ENCODE measurements at regions of chr16 and their contacts with region 1.

Region 1: DNA sequence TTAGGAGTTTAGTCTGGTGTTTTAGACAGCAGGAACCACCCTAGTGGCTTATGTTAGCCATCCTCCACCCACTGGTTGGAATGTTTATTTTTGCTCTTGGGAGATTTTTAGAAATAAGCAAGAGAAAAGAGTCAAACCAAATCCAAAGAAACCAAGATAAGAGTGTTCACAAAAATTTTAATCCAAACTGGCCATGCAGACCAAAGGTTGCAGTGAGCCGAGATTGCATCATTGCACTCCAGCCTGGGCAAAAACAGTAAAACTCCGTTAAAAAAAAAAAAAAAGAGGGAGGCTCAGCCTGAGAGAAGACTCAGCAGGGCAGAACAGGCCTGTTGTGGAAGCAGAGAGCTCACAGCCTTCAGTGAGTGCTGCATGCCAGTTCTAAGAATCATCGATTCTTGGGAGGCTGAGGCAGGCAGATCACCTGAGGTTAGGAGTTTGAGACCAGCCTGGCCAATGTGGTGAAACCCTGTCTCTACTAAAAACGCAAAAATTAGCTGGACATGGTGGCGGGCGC is 12.2 kb upstream of the C16orf54 start:
- DNase-seq: no peak
- ATAC-seq: no peak
- H3K4me3 ChIP-seq: no peak overlapping the region
- H3K4me3 Mint-ChIP-seq: peak overlapping the region in 2 of 10 donors; percentile 19 to 36
- H3K27ac ChIP-seq: peak overlapping the region; percentile 61
- H3K27ac Mint-ChIP-seq: peak overlapping the region in 8 of 9 donors; percentile 37 to 96 (median 84)
- H3K4me1 ChIP-seq: peaks cover 8 to 33% of the 10 kb centered on the region in 2 donors
- H3K4me1 Mint-ChIP-seq: peaks cover 14 to 58% (median 40%) of the 10 kb centered on the region in 7 donors
- H3K27me3 ChIP-seq: no peaks in the 10 kb centered on the region
- H3K27me3 Mint-ChIP-seq: peaks cover 0 to 6% (median 0%) of the 10 kb centered on the region in 5 donors

Region 2: DNA sequence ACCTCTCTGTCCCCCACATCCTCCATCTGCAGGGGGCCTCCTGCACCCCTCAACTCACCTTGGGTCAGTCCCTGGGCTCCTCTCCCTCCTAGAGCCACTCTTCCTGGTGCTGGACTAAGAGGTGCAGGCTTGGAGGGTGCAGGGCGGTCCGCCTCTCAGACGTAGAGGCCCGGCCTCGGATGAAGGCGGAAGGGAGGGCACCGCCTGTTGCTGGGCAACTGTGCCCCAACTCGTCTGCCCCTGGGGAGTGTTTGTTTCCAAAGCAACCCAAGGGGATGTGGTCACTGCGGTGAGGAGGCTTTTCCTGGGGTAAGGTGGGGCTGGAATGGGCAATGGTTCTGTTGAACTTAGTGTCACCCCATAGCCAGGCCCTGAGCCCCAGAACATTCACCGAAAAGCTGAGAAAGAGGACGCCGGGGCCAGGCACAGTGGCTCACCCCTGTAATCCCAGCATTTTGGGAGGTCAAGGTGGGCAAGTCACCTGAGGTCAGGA is 12.1 kb before region 1 on chr16 and contains the start of gene C16orf54:
- CTCF ChIA-PET with region 1: interaction called, 10 read pairs
- POLR2A ChIA-PET with region 1: interaction called, 36 read pairs
- intact Hi-C with region 1: loop called (anchors 1 kb)
- DNase-seq: peak; percentile 80 to 99 (median 98)
- ATAC-seq: peak; percentile 91
- H3K4me3 ChIP-seq: peak within 1 kb of the TSS; percentile 76
- H3K4me3 Mint-ChIP-seq: peak within 1 kb of the TSS; percentile 96 to 100 (median 99)
- H3K27ac ChIP-seq: peak within 1 kb of the TSS; percentile 99
- H3K27ac Mint-ChIP-seq: peak within 1 kb of the TSS; percentile 95 to 100 (median 99)
- H3K4me1 ChIP-seq: peaks cover 45 to 50% of the 10 kb centered on the region in 2 donors
- H3K4me1 Mint-ChIP-seq: peaks cover 42 to 71% (median 62%) of the 10 kb centered on the region in 7 donors
- H3K27me3 ChIP-seq: no peaks in the 10 kb centered on the region
- H3K27me3 Mint-ChIP-seq: peaks cover 0 to 3% (median 0%) of the 10 kb centered on the region in 5 donors
- total RNA-seq, gene C16orf54: 63.9 to 228 (median 151) TPM

Region 3: DNA sequence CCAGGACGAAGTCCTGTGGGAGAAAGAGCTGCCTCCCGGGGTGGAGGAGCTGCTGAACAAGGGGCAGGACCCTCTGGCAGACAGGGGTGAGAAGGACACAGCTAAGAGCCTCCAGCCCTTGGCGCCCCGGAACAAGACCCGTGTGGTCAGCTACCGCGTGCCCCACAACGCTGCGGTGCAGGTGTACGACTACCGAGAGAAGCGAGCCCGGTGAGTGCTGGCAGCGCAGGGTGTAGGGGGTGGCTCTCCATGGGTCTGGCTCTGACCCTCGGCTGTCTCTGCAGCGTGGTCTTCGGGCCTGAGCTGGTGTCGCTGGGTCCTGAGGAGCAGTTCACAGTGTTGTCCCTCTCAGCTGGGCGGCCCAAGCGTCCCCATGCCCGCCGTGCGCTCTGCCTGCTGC is 83.6 kb after region 1 on chr16:
- CTCF ChIA-PET with region 1: no interaction called
- POLR2A ChIA-PET with region 1: no interaction called
- intact Hi-C with region 1: no loop called
- DNase-seq: no peak
- ATAC-seq: no peak
- H3K4me3 ChIP-seq: no peak overlapping the region
- H3K4me3 Mint-ChIP-seq: no peak overlapping the region
- H3K27ac ChIP-seq: no peak overlapping the region
- H3K27ac Mint-ChIP-seq: peak overlapping the region in 1 of 9 donors; percentile 48
- H3K4me1 ChIP-seq: no peaks in the 10 kb centered on the region
- H3K4me1 Mint-ChIP-seq: peaks cover 0 to 5% (median 3%) of the 10 kb centered on the region in 7 donors
- H3K27me3 ChIP-seq: no peaks in the 10 kb centered on the region
- H3K27me3 Mint-ChIP-seq: no peaks in the 10 kb centered on the region